ENCODE measurements at regions of chr10 and their contacts with region 1.

Region 1: DNA sequence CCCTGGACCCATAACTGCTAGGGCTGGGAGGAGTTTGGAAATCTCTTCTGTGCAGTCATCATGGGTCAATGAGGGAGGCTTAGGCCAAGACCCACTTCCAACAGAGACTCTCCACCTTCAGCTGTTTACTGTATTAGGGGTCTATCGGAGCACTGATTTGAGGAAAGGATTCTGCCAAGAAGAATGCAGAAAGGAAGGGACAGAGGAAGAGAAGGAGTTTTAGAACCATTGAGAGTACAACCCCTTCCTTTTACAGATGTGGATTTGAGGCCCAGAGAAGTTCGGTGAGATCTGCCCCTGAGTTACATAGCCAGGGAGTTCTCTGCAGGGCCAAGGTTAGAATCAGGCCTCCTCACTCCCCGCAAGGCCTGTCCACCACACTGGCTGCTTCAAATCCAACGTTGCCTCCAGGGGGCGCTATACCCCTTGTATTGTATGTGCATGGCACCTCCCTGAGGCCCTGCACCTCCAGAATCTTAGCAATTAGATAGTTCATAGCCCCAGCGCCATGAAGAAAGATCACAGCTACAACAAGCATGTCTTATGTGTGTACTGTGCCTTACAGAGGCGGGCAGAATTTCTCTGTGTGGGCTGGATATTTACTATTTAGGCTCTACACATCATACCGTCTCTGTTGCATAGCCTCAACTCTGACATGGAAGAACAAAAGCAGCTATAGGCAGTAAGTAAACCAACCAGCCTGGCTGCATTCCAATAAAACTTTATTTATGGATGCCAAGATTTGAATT is 246.8 kb downstream of the SKIDA1 start:
- DNase-seq: peak; percentile 69
- H3K4me3 ChIP-seq: no peak overlapping the region
- CTCF ChIP-seq: peak; percentile 87

Region 2: DNA sequence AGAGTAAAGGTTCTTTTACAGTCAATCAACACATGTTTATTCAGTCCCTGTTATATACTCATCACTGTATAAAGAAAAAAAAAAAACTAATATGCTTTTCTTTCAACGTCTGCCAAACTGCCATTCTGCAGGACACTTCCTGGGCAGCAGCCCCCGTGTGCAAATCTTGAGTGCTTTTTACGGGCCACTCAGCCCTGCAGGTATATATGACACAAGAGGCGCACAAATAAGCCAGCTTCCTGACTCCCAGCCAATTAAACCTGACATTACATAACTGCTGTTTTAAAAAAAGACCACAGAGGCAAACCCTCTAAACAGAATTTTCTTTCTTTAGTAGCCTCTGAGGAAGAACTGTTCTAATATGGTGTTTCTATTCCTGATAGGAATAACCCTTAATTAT is 118.5 kb before region 1 on chr10:
- CTCF ChIA-PET with region 1: no interaction called
- POLR2A ChIA-PET with region 1: no interaction called
- DNase-seq: no peak
- H3K4me3 ChIP-seq: no peak overlapping the region
- CTCF ChIP-seq: no peak

Region 3: DNA sequence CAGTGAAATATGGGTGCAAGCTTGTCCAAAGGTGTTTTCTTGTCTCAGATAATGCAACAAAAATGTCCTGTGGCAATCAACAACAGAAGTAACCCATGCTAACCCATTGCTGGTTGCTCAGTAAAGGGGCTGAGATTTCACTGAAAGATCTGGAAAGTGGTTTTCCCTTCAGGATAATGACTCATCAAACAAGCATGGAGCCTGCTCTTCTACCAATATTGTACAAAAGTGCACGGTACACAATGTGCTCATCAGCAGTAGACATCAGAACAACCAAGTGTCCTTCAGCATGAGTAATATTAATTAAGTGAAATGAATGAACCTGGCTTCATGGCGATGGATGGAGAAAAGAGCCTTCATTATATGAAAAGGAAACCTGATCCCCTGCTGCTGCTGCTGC is 94.4 kb before region 1 on chr10:
- CTCF ChIA-PET with region 1: no interaction called
- POLR2A ChIA-PET with region 1: no interaction called
- DNase-seq: no peak
- H3K4me3 ChIP-seq: no peak overlapping the region
- CTCF ChIP-seq: no peak

Region 4: GRCh38 chr10:21265621-21266020 is 13.0 kb before region 1 on chr10:
- CTCF ChIA-PET with region 1: interaction called, 21 read pairs
- POLR2A ChIA-PET with region 1: no interaction called
- DNase-seq: no peak
- H3K4me3 ChIP-seq: no peak overlapping the region
- CTCF ChIP-seq: no peak

Region 5: GRCh38 chr10:21732067-21732772 is 453.6 kb after region 1 on chr10:
- CTCF ChIA-PET with region 1: interaction called, 20 read pairs
- POLR2A ChIA-PET with region 1: no interaction called
- DNase-seq: no peak
- H3K4me3 ChIP-seq: no peak overlapping the region
- CTCF ChIP-seq: peak; percentile 84

Region 6: GRCh38 chr10:21953585-21954057 is 675.0 kb after region 1 on chr10:
- CTCF ChIA-PET with region 1: interaction called, 10 read pairs
- POLR2A ChIA-PET with region 1: no interaction called
- DNase-seq: peak; percentile 1
- H3K4me3 ChIP-seq: no peak overlapping the region
- CTCF ChIP-seq: peak; percentile 8